GM12878 (cell line): ENCODE measurements at regions of chr9 and their contacts with region 1.

Region 1: GRCh38 chr9:34701769-34702736 is 7.9 kb downstream of the CCL21 start:
- DNase-seq: no peak
- ATAC-seq: peak; percentile 96
- H3K4me3 ChIP-seq: no peak overlapping the region
- H3K27ac ChIP-seq: no peak overlapping the region
- H3K4me1 ChIP-seq: no peaks in the 10 kb centered on the region
- H3K27me3 ChIP-seq: peaks cover 0 to 15% of the 10 kb centered on the region in 2 experiments; a peak in 3 of 4 replicates
- CTCF ChIP-seq: peak; percentile 94 to 98 (median 98)
- EP300 ChIP-seq: no peak
- POLR2A ChIP-seq: no peak
- RAD21 ChIP-seq: peak; percentile 87

Region 2: DNA sequence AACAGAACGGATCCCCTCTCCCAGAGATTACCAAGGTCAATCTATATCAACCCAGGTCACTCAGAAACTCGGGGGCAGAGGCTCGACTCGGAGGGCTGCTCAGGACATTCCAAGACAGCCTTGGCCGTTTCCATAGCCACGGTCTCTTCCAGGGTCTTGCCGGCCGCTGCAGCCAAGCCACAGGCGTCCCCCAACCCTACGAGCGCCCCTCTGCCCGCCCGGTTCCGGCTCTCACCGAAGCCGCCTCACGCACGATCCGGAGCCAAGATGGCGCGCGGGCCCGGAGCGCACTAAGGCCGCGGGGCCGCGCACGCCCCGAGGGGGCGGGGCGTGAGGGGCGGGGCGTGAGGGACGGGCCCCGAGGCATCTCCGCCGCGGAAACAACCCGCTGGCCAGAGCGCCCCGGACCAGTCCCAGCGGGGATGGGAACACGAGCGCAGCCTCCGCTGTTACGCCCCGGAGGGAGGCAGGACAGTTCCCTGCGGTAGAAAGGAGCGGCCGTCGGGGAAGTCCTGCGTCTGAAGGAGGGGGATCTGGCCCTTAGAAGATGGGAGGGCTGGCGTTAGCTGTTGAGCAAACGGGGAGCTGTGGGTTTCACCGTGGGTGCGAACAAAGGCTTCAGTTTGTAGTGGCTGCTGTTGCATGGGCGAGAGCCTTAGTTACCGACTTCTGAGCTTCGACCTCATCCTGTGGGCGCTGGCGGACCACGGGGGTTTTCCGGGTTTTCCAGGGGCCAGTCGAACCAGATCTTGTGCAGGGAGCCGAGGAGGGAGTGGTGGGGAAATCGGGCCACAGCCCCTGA is 90.0 kb before region 1 on chr9 and contains the start of gene RPP25L:
- CTCF ChIA-PET with region 1: interaction called, 7 read pairs
- POLR2A ChIA-PET with region 1: no interaction called
- RAD21 ChIA-PET with region 1: no interaction called
- SMC1A ChIA-PET with region 1: no interaction called
- in situ Hi-C with region 1: no loop called
- intact Hi-C with region 1: loop called (anchors 2 kb)
- DNase-seq: no peak
- ATAC-seq: peak; percentile 98
- H3K4me3 ChIP-seq: peak within 1 kb of the TSS; percentile 81
- H3K27ac ChIP-seq: peak within 1 kb of the TSS; percentile 85
- H3K4me1 ChIP-seq: peaks cover 6% of the 10 kb centered on the region; the same call in 1 of the 2 replicates
- H3K27me3 ChIP-seq: no peaks in the 10 kb centered on the region
- CTCF ChIP-seq: no peak
- EP300 ChIP-seq: no peak
- POLR2A ChIP-seq: peak; percentile 99
- RAD21 ChIP-seq: no peak
- polyA plus RNA-seq, gene RPP25L: 7.7 to 14.7 TPM

Region 3: GRCh38 chr9:34675048-34675714 is 26.9 kb before region 1 on chr9:
- CTCF ChIA-PET with region 1: interaction called, 23 read pairs
- POLR2A ChIA-PET with region 1: no interaction called
- RAD21 ChIA-PET with region 1: no interaction called
- SMC1A ChIA-PET with region 1: no interaction called
- in situ Hi-C with region 1: no loop called
- intact Hi-C with region 1: loop called (anchors 1 kb)
- DNase-seq: no peak
- ATAC-seq: peak; percentile 95
- H3K4me3 ChIP-seq: no peak overlapping the region
- H3K27ac ChIP-seq: no peak overlapping the region
- H3K4me1 ChIP-seq: no peaks in the 10 kb centered on the region
- H3K27me3 ChIP-seq: no peaks in the 10 kb centered on the region
- CTCF ChIP-seq: peak; percentile 81 to 90 (median 83)
- EP300 ChIP-seq: no peak
- POLR2A ChIP-seq: no peak
- RAD21 ChIP-seq: peak; percentile 93

Region 4: GRCh38 chr9:34783951-34784487 is 82.0 kb after region 1 on chr9:
- CTCF ChIA-PET with region 1: no interaction called
- POLR2A ChIA-PET with region 1: no interaction called
- RAD21 ChIA-PET with region 1: no interaction called
- SMC1A ChIA-PET with region 1: no interaction called
- in situ Hi-C with region 1: no loop called
- intact Hi-C with region 1: no loop called
- DNase-seq: peak; percentile 5
- ATAC-seq: peak; percentile 79
- H3K4me3 ChIP-seq: no peak overlapping the region
- H3K27ac ChIP-seq: no peak overlapping the region
- H3K4me1 ChIP-seq: no peaks in the 10 kb centered on the region
- H3K27me3 ChIP-seq: no peaks in the 10 kb centered on the region; a peak in 2 of 4 replicates
- CTCF ChIP-seq: no peak
- EP300 ChIP-seq: no peak
- POLR2A ChIP-seq: no peak
- RAD21 ChIP-seq: no peak